HEK293 (cell line): ENCODE measurements at regions of chr16 and their contacts with region 1.

Region 1: GRCh38 chr16:30747799-30748634 is at the start of gene PHKG2:
- H3K4me3 ChIP-seq: peak within 1 kb of the TSS; percentile 87
- H3K27ac ChIP-seq: peak within 1 kb of the TSS; percentile 48
- H3K4me1 ChIP-seq: peaks cover 3% of the 10 kb centered on the region; the same call in 1 of the 2 replicates
- CTCF ChIP-seq: peak; percentile 10; the same call in 1 of the 2 replicates

Region 2: DNA sequence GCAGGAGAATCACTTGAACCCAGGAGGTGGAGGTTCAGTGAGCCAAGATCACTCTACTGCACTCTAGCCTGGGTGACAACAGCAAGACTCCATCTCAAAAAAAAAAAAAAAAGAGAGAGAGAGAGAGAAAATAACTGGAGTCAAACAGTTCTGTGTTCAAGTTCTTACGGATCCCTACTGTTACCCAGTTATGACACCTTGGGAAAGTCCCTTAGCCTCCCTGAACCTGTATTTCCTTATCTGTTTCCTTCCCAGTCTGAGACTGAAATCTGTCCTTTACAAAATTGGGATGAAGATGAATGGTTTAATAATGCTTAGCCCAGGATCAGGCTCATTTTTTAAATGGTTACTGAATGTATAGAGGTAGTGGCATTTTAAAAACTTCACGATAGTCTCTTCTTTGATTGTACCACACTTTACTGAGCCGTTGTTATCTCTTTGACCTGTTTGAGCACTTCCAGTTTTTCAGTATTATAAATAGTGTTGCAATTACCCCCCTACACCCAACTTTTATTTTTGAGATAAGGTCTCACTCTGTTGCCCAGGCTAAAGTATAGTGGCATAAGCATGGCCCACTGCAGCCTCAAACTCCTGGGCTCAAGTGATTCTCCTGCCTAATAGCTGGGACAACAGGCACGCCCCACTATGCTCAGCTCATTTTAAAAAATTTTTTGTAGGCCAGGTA is 238.8 kb before region 1 on chr16:
- CTCF ChIA-PET with region 1: no interaction called
- POLR2A ChIA-PET with region 1: no interaction called
- H3K4me3 ChIP-seq: no peak overlapping the region
- H3K27ac ChIP-seq: no peak overlapping the region
- H3K4me1 ChIP-seq: no peaks in the 10 kb centered on the region
- CTCF ChIP-seq: no peak

Region 3: DNA sequence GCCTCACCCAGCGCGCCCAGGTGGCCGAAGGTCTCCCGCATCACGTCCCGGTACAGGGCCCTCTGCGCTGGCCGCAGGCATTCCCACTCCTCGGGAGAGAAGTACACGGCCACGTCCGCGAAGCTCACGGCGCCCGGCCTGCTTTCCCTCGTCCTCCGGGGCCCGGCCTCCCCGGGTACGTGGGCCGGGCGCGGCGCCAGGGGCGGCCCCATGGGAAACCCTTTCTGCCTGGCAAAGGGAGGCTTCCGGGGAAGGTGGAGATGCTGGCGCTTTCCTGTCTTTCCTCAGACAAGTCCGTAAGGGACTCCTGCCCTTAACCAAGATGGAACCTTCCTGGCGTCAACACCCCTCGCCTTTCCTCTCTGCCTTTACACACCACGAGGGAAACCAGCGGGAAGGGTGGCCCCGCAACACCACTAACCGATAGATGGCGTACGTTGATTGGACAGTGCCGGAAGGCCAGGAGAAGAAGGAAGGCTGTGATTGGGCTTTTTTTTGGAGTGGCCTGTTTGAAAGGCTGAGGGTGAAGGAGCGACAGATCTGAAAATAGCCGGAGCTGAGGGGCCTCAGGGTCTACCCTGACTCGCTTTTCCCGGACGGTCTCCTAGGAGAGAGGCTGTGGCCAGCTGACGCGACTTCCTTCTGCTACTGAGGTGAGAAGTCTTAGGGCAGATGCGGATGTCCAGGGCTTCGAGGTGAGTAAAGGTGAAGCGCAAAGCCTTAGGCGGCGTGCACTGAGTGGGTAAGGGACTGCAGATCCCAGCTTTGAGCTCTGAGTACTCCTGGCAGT is 162.4 kb before region 1 on chr16 and contains the start of gene ZNF785:
- CTCF ChIA-PET with region 1: no interaction called
- POLR2A ChIA-PET with region 1: no interaction called
- H3K4me3 ChIP-seq: peak within 1 kb of the TSS; percentile 24
- H3K27ac ChIP-seq: no peak within 1 kb of the TSS
- H3K4me1 ChIP-seq: no peaks in the 10 kb centered on the region
- CTCF ChIP-seq: no peak

Region 4: DNA sequence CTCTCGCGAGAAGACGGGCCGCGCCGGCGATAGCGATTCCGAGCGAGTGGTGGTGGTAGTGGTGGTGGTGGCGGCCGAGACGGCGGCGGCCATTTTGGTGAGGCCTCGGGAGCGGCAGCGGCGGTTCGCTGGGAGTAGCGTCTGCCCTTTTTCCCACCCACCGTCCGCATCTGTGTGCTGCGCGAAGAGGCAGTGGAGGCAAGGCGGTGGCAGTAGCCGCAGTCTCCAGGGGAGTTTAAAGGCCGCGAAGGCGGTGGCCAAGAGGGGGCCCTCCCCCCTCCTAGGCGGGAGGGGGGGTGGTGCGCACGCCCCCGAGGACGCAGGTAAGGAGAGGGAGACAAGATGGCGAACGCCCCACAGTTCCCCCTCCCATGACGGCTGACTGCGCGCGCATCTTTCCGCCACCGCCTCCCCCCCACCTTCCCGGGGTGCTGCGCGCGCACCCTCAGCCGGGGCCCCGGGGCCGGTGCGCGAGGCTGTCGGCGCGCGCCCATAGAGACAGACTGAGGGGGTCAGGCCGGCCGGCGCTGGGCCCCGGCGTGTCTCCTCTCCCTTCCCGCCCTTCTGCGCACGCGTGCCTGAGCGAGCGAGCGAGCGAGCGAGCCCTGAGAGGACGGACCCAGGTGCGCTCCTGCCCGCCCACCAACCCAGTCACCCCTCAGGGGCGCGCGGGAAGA is 49.7 kb before region 1 on chr16:
- CTCF ChIA-PET with region 1: interaction called, 4 read pairs
- POLR2A ChIA-PET with region 1: interaction called, 19 read pairs
- H3K4me3 ChIP-seq: peak overlapping the region; percentile 98
- H3K27ac ChIP-seq: peak overlapping the region; percentile 100
- H3K4me1 ChIP-seq: no peaks in the 10 kb centered on the region; the same call in 1 of the 2 replicates
- CTCF ChIP-seq: peak; percentile 89

Region 5: DNA sequence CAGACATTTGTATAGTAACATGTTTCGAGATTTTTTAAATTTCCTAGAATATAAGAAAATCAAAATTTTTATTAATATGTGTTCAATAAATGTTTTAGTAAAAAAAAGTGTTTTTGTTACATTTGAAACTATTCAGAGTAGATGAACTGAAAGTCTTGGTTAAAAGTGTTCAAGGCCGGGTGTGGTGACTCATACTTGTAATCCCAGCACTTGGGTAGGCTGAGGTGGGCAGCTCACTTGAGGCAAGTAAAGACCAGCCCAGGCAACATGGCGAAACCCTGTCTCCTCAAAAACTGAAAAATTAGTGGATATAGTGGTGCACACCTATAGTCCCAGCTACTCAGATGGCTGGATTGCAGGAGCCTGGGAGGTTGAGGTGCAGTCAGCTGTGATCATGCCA is 16.6 kb before region 1 on chr16:
- CTCF ChIA-PET with region 1: no interaction called
- POLR2A ChIA-PET with region 1: interaction called, 25 read pairs
- H3K4me3 ChIP-seq: no peak overlapping the region
- H3K27ac ChIP-seq: no peak overlapping the region
- H3K4me1 ChIP-seq: no peaks in the 10 kb centered on the region
- CTCF ChIP-seq: no peak

Region 6: GRCh38 chr16:30761928-30762810 is 14.2 kb after region 1 on chr16 and contains the starts of genes CFAP119 and RNF40:
- CTCF ChIA-PET with region 1: interaction called, 7 read pairs
- POLR2A ChIA-PET with region 1: interaction called, 47 read pairs
- H3K4me3 ChIP-seq: peak within 1 kb of the TSS; percentile 95
- H3K27ac ChIP-seq: peak within 1 kb of the TSS; percentile 83
- H3K4me1 ChIP-seq: peaks cover 4% of the 10 kb centered on the region; the same call in 1 of the 2 replicates
- CTCF ChIP-seq: peak; percentile 47; the same call in 1 of the 2 replicates

Region 7: GRCh38 chr16:30805370-30806169 is 57.6 kb after region 1 on chr16:
- CTCF ChIA-PET with region 1: no interaction called
- POLR2A ChIA-PET with region 1: interaction called, 10 read pairs
- H3K4me3 ChIP-seq: peak overlapping the region; percentile 74
- H3K27ac ChIP-seq: peak overlapping the region; percentile 86
- H3K4me1 ChIP-seq: no peaks in the 10 kb centered on the region
- CTCF ChIP-seq: peak; percentile 79